ENCODE measurements at regions of chr3 and their contacts with region 1.

Region 1: DNA sequence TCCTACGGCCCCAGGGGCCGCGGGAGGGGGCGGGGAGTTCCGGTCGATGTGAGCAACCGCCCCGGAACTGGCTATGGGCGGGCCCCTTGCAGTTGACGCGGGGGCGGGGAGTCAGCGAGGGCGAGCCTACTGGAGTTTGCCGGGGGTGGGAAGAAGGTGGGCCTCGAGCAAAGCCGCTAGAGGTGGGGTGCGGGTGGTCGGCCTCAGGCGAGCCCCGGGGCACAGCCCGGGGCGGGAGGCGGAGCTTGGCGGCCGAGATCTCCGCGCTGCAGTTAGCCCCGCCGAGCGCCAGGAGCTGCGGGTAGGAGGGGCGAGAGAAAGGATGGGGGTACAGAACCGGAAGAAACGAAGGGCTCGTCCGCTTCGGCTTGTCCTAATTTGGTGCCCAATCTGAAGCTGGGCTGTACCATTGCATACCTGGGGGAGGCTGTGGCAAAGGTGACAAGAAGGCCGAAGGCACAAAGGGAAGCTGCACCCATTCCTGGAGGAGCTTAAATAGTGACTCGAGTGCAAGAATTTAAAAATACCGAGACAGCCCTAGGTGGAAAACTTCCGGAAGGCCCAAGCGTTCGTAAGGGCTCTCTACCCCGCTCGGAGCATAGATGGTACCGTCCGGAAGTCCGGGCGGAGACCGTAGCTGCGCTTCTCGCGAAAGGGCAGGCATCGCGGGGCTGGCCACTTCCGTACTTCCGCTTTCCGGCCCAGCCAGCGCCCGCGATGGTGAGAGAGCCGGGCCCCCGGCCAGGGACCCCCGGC is at the starts of genes ARPC4 and TADA3:
- DNase-seq: peak; percentile 77 to 97 (median 92)

Region 2: GRCh38 chr3:9731206-9732079 is 61.1 kb before region 1 on chr3 and contains the start of gene BRPF1:
- intact Hi-C with region 1: loop called (anchors 5 kb)
- DNase-seq: peak; percentile 96 to 100 (median 100)

Region 3: DNA sequence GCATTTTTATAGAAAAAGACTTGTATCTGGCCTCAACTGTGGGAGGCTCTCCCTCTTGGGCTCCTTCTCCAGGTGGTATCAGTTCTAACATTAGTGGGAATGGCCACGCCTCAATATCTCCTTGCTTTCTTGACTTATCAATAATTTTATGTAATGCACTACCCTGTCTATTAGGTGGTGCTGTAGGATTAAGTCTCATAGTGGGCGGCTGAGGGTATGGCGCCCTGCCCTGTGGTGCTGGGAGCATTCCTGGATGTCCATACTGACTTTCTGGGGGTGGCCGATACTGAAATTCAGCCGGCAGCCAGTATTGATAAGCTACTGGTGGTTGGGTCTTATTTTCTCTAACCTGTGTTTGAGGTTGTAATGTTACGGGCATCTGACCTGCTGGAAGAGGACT is 60.0 kb after region 1 on chr3:
- intact Hi-C with region 1: no loop called
- DNase-seq: no peak

Measured in head of caudate nucleus (tissue), 42 donors.